Lower leg skin (tissue), 4 donors: ENCODE measurements at regions of chr14 and their contacts with region 1.

Region 1: DNA sequence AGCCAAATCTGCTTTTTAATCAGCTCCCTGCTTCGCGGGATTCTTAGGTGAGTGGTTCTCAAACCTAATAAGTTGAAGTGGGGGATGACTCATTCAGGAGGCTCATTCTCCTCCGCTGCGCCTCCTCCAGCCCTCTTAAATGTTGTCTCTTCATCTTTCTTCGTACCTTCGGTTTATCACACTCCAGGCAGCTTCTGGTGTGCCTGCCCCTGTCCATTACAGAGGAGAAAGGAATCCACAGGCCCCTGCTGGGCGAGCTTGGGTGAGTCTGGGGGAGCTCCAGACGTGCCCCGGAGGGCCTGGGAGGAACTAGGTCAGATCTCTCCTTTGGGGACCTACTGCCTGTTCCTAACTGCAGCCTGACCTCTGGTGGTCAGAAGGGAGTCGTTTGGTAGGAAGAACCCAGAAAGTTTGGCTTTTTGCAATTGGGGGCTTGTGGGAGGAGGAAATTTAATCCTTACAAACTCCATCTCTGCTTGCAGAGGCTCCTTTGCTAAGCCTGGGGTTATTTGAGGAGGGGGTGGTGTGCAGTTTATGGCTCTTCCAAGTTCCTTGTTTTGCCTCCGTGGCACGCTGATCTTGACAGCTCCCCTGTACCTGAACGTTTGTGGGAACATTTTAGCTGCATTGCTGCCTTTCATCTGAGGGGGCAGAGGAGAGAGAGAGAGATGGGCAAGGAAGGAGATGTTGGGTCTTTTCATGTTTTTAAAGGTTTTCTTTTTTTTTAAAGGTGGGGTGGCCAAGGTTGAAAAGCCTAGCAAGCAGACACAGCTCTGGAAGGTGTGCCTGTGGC is 84.1 kb upstream of the GNG2 start:
- DNase-seq: peak; percentile 26 to 87
- H3K4me3 ChIP-seq: no peak overlapping the region
- CTCF ChIP-seq: no peak
- POLR2A ChIP-seq: no peak

Region 2: GRCh38 chr14:51283402-51284085 is 492.8 kb before region 1 on chr14:
- intact Hi-C with region 1: loop called (anchors 5 kb)
- DNase-seq: no peak
- H3K4me3 ChIP-seq: no peak overlapping the region
- CTCF ChIP-seq: peak in 1 of 3 donors; percentile 84
- POLR2A ChIP-seq: no peak

Region 3: GRCh38 chr14:51979088-51979709 is 202.9 kb after region 1 on chr14:
- intact Hi-C with region 1: no loop called
- DNase-seq: peak; percentile 79 to 96
- H3K4me3 ChIP-seq: no peak overlapping the region
- CTCF ChIP-seq: peak in 1 of 3 donors; percentile 68
- POLR2A ChIP-seq: no peak